Activated naive CD4-positive, alpha-beta T cell treated with anti-CD3 and anti-CD28 coated beads for 36 hours (primary cell): ENCODE measurements at regions of chr14 and their contacts with region 1.

Region 1: DNA sequence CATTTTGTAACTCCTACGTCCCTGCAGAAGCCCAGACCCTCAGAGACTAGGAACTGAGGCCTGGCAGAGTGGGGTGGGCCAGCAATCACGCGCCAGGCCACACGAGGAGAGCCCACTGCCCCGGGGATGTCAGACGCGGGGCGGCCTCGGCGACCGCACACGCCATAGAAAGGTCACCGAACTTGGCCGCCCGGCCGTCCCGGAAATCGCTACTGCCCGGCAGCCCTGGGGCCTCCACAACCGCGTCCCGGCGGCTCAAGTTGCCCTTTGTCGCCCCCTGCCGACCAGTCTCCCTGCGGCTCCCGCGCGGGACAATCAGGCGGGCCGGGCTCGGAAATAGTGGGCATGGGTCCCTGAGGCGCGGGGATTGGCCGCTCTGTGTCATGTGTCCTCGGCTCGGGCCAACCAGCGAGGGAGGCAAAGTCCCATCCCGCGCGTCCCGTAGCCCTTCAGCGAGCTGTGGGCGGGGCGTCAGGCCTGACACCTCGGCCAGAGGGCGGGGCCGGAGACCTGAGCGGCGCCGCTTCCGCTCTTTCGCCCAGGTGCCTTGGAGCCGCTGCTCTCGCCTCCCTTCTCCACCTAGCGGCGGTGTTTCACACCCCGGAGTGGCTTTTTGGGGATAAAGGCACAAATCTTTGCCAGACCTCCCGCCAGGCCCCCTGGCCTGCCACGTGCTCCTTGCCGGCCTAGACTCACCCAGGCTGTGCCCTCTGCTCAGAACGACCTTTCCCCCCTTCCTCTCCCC is 33.4 kb upstream of the DEGS2 start:
- DNase-seq: peak; percentile 100
- H3K4me3 Mint-ChIP-seq: peak overlapping the region; percentile 75
- H3K27ac Mint-ChIP-seq: peak overlapping the region; percentile 94
- H3K4me1 Mint-ChIP-seq: peaks cover 10% of the 10 kb centered on the region
- H3K27me3 Mint-ChIP-seq: no peaks in the 10 kb centered on the region

Region 2: DNA sequence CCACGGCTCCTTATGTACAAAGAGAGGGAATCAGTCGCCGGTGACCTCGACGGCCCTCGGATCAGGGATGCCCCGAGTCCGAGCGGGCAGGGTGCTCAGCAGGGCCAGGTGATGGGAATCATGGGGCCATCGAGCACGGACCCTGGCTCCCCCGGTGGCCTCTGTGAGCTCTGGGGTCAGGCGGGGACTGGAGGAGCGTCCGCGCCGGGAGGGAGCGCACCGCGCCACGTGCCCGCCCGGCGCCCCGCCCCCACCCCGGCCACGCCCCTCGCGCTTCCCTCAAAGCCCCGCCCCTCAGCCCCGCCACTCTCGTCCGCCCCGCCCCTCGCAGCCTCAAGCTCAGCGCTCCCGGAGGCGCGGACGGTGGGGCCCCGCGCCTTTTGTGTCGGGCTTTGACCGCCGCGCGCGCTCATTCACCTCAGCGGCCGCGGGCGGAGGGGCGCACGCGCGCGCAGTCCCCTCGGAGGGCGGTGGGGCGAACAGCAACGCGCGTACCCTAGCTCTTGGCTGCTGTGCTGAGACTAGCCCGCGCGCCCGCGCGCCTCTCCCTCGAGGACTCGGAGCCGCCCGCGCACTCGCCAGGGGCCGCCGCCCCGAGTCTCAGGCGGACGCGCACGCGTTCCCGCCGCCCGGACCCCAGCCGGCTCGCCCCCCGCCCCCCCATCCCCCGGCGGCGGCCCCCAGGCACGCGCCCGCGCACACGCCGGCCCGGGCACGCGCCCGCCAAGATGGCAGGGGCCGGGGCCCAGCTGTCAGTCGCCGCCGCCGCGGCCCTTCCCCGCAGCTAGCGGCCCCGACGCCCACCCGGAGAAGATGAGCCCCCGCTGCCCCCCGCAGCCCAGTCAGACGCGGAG is 221.5 kb before region 1 on chr14:
- CTCF ChIA-PET with region 1: no interaction called
- intact Hi-C with region 1: loop called (anchors 2 kb)
- DNase-seq: peak; percentile 86
- H3K4me3 Mint-ChIP-seq: peak overlapping the region; percentile 52
- H3K27ac Mint-ChIP-seq: no peak overlapping the region
- H3K4me1 Mint-ChIP-seq: peaks cover 17% of the 10 kb centered on the region
- H3K27me3 Mint-ChIP-seq: peaks cover 12% of the 10 kb centered on the region

Region 3: GRCh38 chr14:100056964-100057795 is 135.7 kb before region 1 on chr14:
- CTCF ChIA-PET with region 1: interaction called, 4 read pairs
- intact Hi-C with region 1: loop called (anchors 1 kb)
- DNase-seq: no peak
- H3K4me3 Mint-ChIP-seq: peak overlapping the region; percentile 25
- H3K27ac Mint-ChIP-seq: peak overlapping the region; percentile 80
- H3K4me1 Mint-ChIP-seq: peaks cover 52% of the 10 kb centered on the region
- H3K27me3 Mint-ChIP-seq: no peaks in the 10 kb centered on the region

Region 4: GRCh38 chr14:100155042-100155846 is 37.6 kb before region 1 on chr14:
- CTCF ChIA-PET with region 1: interaction called, 6 read pairs
- intact Hi-C with region 1: loop called (anchors 2 kb)
- DNase-seq: peak; percentile 60
- H3K4me3 Mint-ChIP-seq: no peak overlapping the region
- H3K27ac Mint-ChIP-seq: no peak overlapping the region
- H3K4me1 Mint-ChIP-seq: no peaks in the 10 kb centered on the region
- H3K27me3 Mint-ChIP-seq: peaks cover 17% of the 10 kb centered on the region

Region 5: GRCh38 chr14:100234511-100234910 is 41.7 kb after region 1 on chr14:
- CTCF ChIA-PET with region 1: interaction called, 15 read pairs
- intact Hi-C with region 1: loop called (anchors 1 kb)
- DNase-seq: peak; percentile 55
- H3K4me3 Mint-ChIP-seq: no peak overlapping the region
- H3K27ac Mint-ChIP-seq: peak overlapping the region; percentile 81
- H3K4me1 Mint-ChIP-seq: peaks cover 54% of the 10 kb centered on the region
- H3K27me3 Mint-ChIP-seq: no peaks in the 10 kb centered on the region

Region 6: DNA sequence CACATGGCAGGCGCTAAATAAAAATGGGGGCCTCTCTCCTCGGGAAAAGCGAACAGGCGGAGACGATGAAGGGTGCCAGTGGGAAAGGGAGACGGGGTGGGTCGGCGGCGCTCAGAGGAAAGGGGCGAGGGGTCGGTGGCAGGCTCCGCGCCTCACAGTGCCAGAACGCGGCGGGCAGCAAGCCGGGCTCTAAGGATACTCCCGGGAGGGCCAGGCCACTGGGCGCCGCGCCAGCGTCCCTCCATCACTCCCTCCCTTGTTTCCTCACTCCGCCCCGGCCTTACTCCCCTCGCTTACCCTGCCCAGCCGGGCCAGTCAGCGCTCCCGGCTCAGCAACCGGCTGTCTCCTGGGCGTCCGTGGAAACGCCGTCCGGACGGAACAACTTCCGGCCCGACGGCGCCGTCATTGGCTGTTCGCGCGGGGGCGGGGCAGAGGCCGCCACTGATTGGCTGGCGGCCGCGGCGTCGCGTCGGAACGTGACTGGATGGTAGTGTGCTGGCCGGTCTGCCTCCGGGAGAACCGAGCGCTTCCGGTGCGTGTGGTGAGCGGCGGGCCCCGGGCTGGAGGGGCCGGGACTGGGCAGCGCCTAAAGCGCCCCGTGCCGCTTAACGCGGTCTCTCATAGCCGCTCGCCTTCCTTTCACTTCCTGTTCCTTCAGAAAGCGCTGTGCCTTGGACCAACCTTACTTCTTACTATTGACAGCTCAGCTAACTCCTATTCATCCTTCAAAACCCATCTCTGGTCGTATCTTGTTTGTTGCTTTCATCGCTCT is 183.3 kb after region 1 on chr14:
- CTCF ChIA-PET with region 1: interaction called, 6 read pairs
- intact Hi-C with region 1: loop called (anchors 1 kb)
- DNase-seq: peak; percentile 94
- H3K4me3 Mint-ChIP-seq: peak within 1 kb of the TSS; percentile 99
- H3K27ac Mint-ChIP-seq: peak within 1 kb of the TSS; percentile 98
- H3K4me1 Mint-ChIP-seq: peaks cover 45% of the 10 kb centered on the region
- H3K27me3 Mint-ChIP-seq: no peaks in the 10 kb centered on the region